Endothelial cell of umbilical vein (primary cell): ENCODE measurements at regions of chr1 and their contacts with region 1.

Region 1: DNA sequence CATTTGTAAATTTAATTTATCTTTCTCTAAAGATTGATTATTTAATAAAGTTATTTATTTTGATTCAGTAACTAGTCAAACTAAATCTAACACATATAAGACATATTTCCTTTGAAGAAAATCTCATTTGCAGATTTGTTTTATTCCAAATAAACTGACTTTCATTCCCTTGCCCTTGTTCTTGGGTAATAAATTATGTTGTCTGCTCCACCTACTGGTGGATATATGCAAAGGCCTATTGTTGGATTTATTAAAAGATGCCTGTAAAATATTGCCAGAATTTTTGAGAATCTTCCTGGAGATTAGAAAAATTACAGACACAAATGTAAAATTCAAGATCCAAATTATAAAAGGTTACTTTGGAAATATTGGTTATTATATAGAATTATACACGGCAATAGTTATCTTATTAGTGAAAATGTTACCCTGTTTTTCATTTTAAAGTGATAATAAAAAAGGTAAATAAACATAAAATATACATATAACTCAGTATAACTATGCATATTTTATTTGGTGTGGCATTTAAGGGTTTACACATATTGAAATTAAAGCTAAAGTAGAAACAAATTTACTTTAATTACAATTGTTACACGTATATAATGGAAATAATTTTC is 116.1 kb downstream of the SPATA17 start:
- DNase-seq: peak; percentile 34
- H3K4me3 ChIP-seq: no peak overlapping the region
- H3K27ac ChIP-seq: no peak overlapping the region
- H3K4me1 ChIP-seq: no peaks in the 10 kb centered on the region
- H3K27me3 ChIP-seq: no peaks in the 10 kb centered on the region
- CTCF ChIP-seq: peak; percentile 47 to 49
- POLR2A ChIP-seq: no peak

Region 2: DNA sequence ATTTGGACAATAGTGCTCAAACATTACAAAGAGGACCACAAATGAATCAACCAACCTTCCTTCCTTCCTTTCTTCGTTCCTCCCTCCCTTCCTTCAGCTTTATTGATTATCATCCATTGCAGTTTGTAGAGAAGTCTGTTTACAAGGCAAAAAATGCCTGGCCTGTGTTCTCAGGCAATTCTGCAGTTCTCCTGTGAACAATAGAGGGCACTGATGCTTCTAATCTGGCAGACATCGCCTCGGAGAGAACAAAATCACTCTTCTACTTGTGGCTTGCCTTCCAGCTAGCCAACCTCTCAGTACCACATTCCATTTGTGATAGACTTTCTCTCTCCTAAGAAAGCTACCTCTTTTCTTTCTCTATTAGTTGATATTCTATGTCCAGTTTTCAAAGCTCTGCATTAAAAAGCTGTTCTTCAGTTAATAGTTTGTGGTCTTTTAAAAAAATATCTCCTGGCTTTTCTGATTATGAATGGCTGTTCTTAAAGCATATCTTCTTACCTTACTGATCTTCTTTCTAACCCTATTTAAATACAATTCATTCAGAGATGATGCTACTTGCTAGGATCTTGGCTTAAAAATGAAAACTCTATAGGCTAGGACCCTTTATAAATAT is 997.1 kb before region 1 on chr1:
- CTCF ChIA-PET with region 1: no interaction called
- POLR2A ChIA-PET with region 1: no interaction called
- dilution Hi-C with region 1: no loop called
- intact Hi-C with region 1: loop called (anchors 2 kb)
- DNase-seq: peak; percentile 2
- H3K4me3 ChIP-seq: no peak overlapping the region
- H3K27ac ChIP-seq: no peak overlapping the region
- H3K4me1 ChIP-seq: no peaks in the 10 kb centered on the region
- H3K27me3 ChIP-seq: no peaks in the 10 kb centered on the region
- CTCF ChIP-seq: peak; percentile 4 to 18
- POLR2A ChIP-seq: no peak

Region 3: GRCh38 chr1:217431393-217431792 is 315.9 kb before region 1 on chr1:
- CTCF ChIA-PET with region 1: no interaction called
- POLR2A ChIA-PET with region 1: no interaction called
- dilution Hi-C with region 1: no loop called
- intact Hi-C with region 1: loop called (anchors 10 kb)
- DNase-seq: no peak
- H3K4me3 ChIP-seq: no peak overlapping the region
- H3K27ac ChIP-seq: no peak overlapping the region
- H3K4me1 ChIP-seq: no peaks in the 10 kb centered on the region
- H3K27me3 ChIP-seq: no peaks in the 10 kb centered on the region
- CTCF ChIP-seq: no peak
- POLR2A ChIP-seq: no peak